ENCODE measurements at regions of chr7 and their contacts with region 1.

Region 1: GRCh38 chr7:22559829-22560489 is 60.0 kb upstream of the STEAP1B start:
- DNase-seq: peak in 1 of 2 donors; percentile 85
- H3K4me3 ChIP-seq: no peak overlapping the region
- H3K27ac ChIP-seq: no peak overlapping the region
- H3K4me1 ChIP-seq: peaks cover 0 to 42% of the 10 kb centered on the region in 2 donors
- H3K27me3 ChIP-seq: no peaks in the 10 kb centered on the region
- CTCF ChIP-seq: peak; percentile 77 to 90 (median 89)

Region 2: GRCh38 chr7:22577396-22578001 is 17.5 kb after region 1 on chr7:
- intact Hi-C with region 1: loop called (anchors 1 kb)
- DNase-seq: peak; percentile 21 to 87
- H3K4me3 ChIP-seq: no peak overlapping the region
- H3K27ac ChIP-seq: peak overlapping the region; percentile 79 to 89
- H3K4me1 ChIP-seq: peaks cover 7 to 31% of the 10 kb centered on the region in 2 donors
- H3K27me3 ChIP-seq: no peaks in the 10 kb centered on the region
- CTCF ChIP-seq: no peak

Region 3: DNA sequence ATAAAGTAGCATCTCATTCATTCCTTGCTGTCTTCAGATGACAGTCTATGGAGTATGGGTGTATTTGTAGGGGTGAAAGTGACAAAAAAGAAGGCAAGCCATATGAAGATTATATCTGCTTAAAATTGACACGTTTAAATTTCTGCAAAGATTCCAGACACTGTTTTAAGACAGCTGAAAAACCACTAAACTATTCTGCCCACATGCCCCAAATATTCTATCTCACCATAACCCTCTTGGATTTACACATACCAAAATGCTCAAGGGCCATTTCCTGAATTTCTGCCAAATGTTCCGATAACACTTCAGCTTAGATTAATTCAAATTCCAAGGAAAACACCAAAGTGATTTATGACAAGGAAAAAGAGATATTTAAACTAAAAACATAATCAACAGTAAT is 67.2 kb after region 1 on chr7:
- intact Hi-C with region 1: loop called (anchors 5 kb)
- DNase-seq: no peak
- H3K4me3 ChIP-seq: no peak overlapping the region
- H3K27ac ChIP-seq: no peak overlapping the region
- H3K4me1 ChIP-seq: peaks cover 0 to 5% of the 10 kb centered on the region in 2 donors
- H3K27me3 ChIP-seq: no peaks in the 10 kb centered on the region
- CTCF ChIP-seq: no peak

Region 4: GRCh38 chr7:22782616-22783232 is 222.8 kb after region 1 on chr7:
- intact Hi-C with region 1: loop called (anchors 2 kb)
- DNase-seq: peak in 1 of 2 donors; percentile 74
- H3K4me3 ChIP-seq: no peak overlapping the region
- H3K27ac ChIP-seq: no peak overlapping the region
- H3K4me1 ChIP-seq: no peaks in the 10 kb centered on the region
- H3K27me3 ChIP-seq: no peaks in the 10 kb centered on the region
- CTCF ChIP-seq: peak; percentile 41 to 66 (median 55)

Region 5: DNA sequence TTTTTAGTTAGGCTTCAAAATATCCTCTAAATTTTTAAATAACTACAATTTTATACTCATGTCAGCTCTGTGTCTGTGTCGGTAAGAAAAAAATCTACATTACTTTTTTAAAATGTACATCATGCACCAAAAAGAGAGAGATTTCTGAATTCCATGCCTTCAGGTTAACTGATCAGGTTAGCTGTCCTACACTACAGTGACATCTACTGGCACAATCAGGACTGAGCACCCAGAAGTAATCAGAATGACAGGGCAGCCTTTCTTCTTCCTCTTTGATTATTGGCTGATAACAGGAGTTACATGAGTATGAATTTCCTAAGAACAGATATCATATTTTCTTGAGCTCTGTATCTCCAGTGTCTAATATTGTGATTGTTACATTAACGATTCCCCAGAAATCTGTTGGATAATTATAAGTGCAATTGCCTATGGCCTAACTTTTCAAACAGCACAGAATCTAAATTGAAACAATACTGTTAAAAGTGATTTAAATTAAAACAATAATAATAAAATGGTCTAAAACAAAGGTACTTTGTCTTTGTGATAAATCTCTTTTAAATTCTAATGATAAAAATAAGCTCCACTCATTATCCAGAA is 495.7 kb after region 1 on chr7:
- intact Hi-C with region 1: loop called (anchors 1 kb)
- DNase-seq: peak in 1 of 2 donors; percentile 68
- H3K4me3 ChIP-seq: no peak overlapping the region
- H3K27ac ChIP-seq: no peak overlapping the region
- H3K4me1 ChIP-seq: no peaks in the 10 kb centered on the region
- H3K27me3 ChIP-seq: no peaks in the 10 kb centered on the region
- CTCF ChIP-seq: peak; percentile 74 to 96 (median 88)

Region 6: DNA sequence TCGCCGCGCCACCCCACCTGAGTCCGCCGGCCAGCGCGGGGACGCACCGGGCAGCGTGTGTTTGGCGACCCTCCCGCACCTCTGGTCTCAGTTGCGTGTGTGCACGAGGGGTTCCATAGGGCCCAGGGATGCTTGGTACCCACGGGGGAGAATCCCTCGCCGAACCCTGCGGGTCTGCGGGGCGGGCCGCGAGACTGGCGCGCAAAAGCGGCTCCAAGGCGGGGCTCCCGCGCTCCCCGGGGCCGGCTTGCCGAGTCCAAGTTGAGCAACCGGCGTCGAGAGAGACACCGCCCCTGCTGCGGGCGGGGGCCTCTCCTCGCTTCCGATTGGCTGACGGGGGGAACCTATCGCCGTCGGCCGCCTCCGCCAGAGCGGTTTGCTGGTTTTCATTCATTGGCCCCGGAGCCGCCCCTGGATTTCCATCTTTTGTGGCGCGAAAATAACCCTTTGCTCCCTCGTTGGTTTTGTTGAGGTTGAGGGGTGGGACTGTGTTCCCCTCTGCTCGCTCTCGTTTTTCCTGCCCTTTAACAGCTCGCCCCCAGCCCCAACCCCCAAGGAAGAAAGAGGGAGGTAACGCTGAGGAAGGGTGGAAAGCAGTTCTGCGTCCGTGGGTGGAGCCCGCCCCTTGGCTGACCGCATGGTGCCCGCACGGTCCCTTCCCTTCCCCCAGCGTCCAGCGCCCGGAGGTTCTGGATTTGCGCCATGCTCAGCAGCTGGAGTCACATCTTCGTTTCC is 914.3 kb after region 1 on chr7:
- intact Hi-C with region 1: loop called (anchors 5 kb)
- DNase-seq: peak in 1 of 2 donors; percentile 71
- H3K4me3 ChIP-seq: peak overlapping the region; percentile 17 to 35
- H3K27ac ChIP-seq: no peak overlapping the region
- H3K4me1 ChIP-seq: peaks cover 4 to 19% of the 10 kb centered on the region in 2 donors
- H3K27me3 ChIP-seq: peaks cover 70% of the 10 kb centered on the region
- CTCF ChIP-seq: no peak

Measured in ascending aorta (tissue), 2 donors.